ENCODE measurements at regions of chr12 and their contacts with region 1.

Region 1: GRCh38 chr12:34022079-34022830 is at the start of gene ALG10:
- DNase-seq: peak; percentile 99
- H3K4me3 ChIP-seq: peak within 1 kb of the TSS; percentile 94
- H3K27ac ChIP-seq: peak within 1 kb of the TSS; percentile 59
- H3K4me1 ChIP-seq: peaks cover 12% of the 10 kb centered on the region; the same call in 1 of the 2 replicates
- H3K27me3 ChIP-seq: no peaks in the 10 kb centered on the region
- total RNA-seq, gene ALG10: 4.3 and 4.4 TPM in 2 replicates

Region 2: GRCh38 chr12:32365473-32366064 is 1656.7 kb before region 1 on chr12:
- in situ Hi-C with region 1: loop called (anchors 25 kb)
- DNase-seq: peak; percentile 78
- H3K4me3 ChIP-seq: no peak overlapping the region
- H3K27ac ChIP-seq: no peak overlapping the region
- H3K4me1 ChIP-seq: peaks cover 5% of the 10 kb centered on the region
- H3K27me3 ChIP-seq: no peaks in the 10 kb centered on the region

Region 3: DNA sequence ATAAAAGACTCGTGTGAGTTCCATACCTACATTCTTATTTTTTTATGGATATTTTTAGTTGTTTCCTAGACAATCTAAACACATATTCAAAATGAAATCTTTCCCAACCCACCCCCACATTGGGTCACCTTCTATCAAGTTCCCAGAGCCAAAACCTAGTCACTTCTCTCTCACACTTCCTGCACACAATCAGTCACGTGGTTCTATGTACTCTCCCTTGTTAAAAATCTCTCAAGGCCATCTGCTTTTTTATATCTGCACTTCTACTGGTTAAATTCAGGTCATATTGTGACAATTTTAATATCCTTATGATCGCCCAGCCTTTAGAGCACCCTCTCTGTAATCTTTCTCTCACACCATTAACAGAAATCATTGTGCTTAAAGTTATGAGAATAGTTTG is 407.6 kb before region 1 on chr12:
- in situ Hi-C with region 1: no loop called
- DNase-seq: no peak
- H3K4me3 ChIP-seq: no peak overlapping the region
- H3K27ac ChIP-seq: no peak overlapping the region
- H3K4me1 ChIP-seq: no peaks in the 10 kb centered on the region
- H3K27me3 ChIP-seq: no peaks in the 10 kb centered on the region

Measured in GM23248 (cell line).